Ascending aorta (tissue), 2 donors: ENCODE measurements at regions of chr4 and their contacts with region 1.

Region 1: GRCh38 chr4:4541661-4542570 is at the start of gene STX18:
- DNase-seq: peak; percentile 23 to 88
- H3K4me3 ChIP-seq: peak within 1 kb of the TSS; percentile 75 to 90
- H3K27ac ChIP-seq: peak within 1 kb of the TSS; percentile 74 to 80
- H3K4me1 ChIP-seq: peaks cover 3 to 22% of the 10 kb centered on the region in 2 donors
- H3K27me3 ChIP-seq: no peaks in the 10 kb centered on the region
- CTCF ChIP-seq: no peak
- total RNA-seq, gene STX18: 28.2 TPM

Region 2: DNA sequence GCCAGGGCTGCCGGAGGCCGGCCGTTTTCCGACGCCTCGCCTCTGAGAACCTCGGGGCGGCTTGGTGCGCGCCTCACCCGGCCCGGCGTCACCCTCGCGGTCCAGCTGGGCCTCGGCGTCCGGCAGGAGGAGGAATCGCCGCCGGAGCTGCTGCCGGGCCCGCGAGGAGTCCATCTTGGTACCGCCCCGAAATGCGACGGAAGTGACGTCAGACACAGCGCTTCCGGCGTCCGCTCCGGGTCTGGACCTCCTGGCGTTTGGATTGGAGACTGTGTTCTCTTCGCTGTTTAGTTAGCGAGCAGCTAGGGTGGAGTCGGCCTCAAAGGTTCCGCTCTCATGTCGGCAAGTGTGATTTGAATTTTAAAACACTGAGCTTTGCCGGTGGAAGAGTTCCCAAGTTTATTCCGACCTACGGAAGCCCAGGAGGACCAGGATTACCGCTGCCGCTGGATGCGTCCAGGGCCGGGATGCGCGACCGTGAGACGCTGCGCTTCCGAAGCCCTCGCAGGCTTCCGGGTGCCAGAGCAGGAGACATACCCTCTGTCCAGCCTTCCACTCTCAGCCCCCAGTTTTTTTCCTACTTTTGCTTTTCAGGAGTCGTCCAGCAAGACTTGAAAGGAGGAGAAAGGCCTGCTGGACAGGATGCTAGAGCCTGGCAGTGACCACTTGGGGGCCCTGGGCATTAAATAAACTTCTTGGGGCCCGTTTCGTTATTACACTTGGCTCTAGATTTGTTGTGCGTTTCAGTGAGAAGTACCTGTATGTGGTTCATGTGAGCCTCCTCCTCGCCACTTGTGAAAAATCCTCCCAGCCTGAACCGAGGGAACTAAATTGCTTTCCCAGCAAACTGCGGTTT is 293.7 kb before region 1 on chr4 and contains the start of gene TMEM128:
- intact Hi-C with region 1: loop called (anchors 1 kb)
- DNase-seq: peak; percentile 53 to 97
- H3K4me3 ChIP-seq: peak within 1 kb of the TSS; percentile 69 to 86
- H3K27ac ChIP-seq: peak within 1 kb of the TSS; percentile 89 to 96
- H3K4me1 ChIP-seq: peaks cover 2 to 11% of the 10 kb centered on the region in 2 donors
- H3K27me3 ChIP-seq: no peaks in the 10 kb centered on the region
- CTCF ChIP-seq: peak in 2 of 3 experiments; percentile 15 to 17
- total RNA-seq, gene TMEM128: 0.64 TPM

Region 3: DNA sequence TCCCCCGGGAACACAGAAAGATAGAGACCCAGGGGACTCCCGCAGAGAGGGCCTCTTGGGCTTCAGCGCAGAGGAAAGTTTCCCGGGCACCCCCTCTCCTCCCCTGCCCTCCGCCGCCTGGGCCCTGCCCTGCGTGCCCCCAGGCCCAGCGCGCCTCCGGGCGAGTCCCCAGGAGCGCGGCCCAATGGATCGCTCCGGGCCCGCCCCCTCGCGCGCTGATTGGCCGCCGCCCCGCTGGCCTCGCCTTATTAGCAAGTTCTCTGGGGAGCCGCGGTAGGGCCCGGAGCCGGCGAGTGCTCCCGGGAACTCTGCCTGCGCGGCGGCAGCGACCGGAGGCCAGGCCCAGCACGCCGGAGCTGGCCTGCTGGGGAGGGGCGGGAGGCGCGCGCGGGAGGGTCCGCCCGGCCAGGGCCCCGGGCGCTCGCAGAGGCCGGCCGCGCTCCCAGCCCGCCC is 317.5 kb after region 1 on chr4 and contains the start of gene MSX1:
- intact Hi-C with region 1: loop called (anchors 10 kb)
- DNase-seq: peak; percentile 47 to 91
- H3K4me3 ChIP-seq: peak within 1 kb of the TSS; percentile 73 to 81
- H3K27ac ChIP-seq: peak within 1 kb of the TSS in 1 of 2 donors; percentile 15
- H3K4me1 ChIP-seq: peaks cover 0 to 8% of the 10 kb centered on the region in 2 donors
- H3K27me3 ChIP-seq: peaks cover 14% of the 10 kb centered on the region
- CTCF ChIP-seq: no peak
- total RNA-seq, gene MSX1: 26.0 TPM